Mammary epithelial cell (primary cell): ENCODE measurements at regions of chr20 and their contacts with region 1.

Region 1: DNA sequence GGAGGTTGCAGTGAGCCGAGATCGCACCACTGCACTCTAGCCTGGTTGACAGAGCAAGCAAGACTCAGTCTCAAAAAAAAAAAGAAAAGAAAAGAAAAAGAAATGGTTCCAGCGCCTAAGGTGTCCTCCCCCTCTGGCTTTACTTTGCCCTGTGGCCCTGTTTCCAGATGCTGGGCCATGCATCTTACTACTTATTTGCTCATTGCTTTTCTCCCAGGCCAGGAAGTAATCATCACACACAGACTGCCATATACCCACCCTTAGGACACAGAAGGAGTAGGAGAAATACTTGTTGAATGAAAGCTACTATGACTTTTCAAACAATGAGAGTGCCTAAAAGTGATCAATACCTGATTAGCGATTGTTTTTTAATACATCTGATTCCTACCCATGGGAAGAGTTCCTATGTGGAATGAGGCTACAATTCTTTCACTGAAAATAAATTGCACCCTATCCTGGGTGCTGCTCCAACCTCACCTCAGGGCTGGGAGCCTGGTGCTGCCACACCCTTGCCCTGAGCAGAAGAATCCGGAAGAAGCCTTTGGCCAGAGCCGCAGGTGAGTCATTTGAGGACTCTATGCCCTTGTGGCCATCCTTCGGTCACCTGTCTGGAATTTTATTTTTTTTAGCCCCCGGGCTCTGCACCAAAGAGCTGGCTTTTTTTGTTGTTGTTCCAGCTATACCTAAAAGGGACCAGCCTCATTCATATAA is 22.8 kb upstream of the TFAP2C start:
- DNase-seq: peak; percentile 74
- H3K4me3 ChIP-seq: no peak overlapping the region
- H3K27ac ChIP-seq: peak overlapping the region; percentile 70
- H3K4me1 ChIP-seq: peaks cover 17% of the 10 kb centered on the region
- H3K27me3 ChIP-seq: no peaks in the 10 kb centered on the region
- CTCF ChIP-seq: no peak

Region 2: DNA sequence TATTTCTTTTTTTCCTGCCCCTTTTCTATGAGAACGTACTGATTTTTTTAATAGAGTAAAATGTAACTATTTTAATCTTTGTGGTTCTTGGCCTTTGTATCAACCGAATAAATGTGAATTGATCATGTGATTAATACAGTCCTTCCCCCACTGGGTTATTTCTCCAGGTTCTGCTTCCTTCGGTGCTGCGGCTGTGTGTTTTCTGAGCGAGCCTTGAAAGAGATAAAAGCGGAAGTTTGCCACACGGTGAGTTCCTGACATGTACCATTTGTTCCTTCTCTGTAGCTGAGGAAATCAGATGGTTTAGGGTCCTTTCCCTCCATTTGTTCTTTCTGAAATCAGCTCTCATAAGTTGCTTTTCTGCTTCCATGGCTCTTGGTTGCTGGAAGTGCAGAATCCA is 122.4 kb before region 1 on chr20:
- CTCF ChIA-PET with region 1: no interaction called
- dilution Hi-C with region 1: no loop called
- in situ Hi-C with region 1: no loop called
- intact Hi-C with region 1: no loop called
- DNase-seq: no peak
- H3K4me3 ChIP-seq: no peak overlapping the region
- H3K27ac ChIP-seq: no peak overlapping the region
- H3K4me1 ChIP-seq: no peaks in the 10 kb centered on the region
- H3K27me3 ChIP-seq: no peaks in the 10 kb centered on the region
- CTCF ChIP-seq: no peak

Region 3: DNA sequence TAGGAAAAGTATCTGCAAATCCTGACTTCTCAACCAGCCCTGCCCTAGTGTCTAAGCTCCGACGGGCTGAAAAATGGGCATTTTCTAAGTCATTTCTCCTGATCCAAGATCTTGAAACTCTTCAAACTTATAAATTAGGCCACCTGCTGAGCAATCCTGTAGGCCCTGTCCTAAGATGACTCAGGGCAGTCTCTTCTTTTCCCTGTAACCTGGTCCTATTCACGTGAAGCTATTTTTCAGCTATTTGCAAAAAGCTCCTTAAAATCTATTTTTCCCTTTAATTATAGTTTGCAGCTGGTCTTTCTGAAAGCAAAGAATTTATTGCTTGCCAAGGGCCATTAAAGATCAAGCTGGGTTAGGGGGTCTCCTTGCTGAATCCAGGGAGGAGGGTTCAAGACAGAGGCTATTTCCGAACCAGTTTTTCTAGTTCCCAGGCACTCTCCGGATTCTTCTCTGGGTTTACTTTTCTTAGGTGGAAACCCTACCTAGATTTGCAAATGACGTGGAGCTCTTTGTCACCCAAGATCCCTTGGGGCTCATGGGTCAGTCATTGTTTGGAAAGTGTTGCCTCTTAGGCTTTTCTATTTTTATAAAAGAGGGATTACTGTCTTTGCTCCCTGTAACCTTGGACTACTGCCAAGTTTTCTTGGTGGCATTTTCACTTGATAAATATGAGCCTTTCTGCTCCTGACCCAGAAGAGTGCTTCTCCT is 39.9 kb before region 1 on chr20:
- CTCF ChIA-PET with region 1: no interaction called
- dilution Hi-C with region 1: loop called (anchors 5 kb)
- in situ Hi-C with region 1: no loop called
- intact Hi-C with region 1: no loop called
- DNase-seq: no peak
- H3K4me3 ChIP-seq: no peak overlapping the region
- H3K27ac ChIP-seq: no peak overlapping the region
- H3K4me1 ChIP-seq: no peaks in the 10 kb centered on the region
- H3K27me3 ChIP-seq: no peaks in the 10 kb centered on the region
- CTCF ChIP-seq: no peak